ENCODE measurements at regions of chr2 and their contacts with region 1.

Region 1: GRCh38 chr2:73080097-73080710 is 8.7 kb upstream of the SFXN5 start:
- DNase-seq: no peak
- ATAC-seq: no peak
- H3K4me3 ChIP-seq: no peak overlapping the region
- H3K27ac ChIP-seq: no peak overlapping the region
- H3K4me1 ChIP-seq: no peaks in the 10 kb centered on the region
- H3K27me3 ChIP-seq: no peaks in the 10 kb centered on the region
- CTCF ChIP-seq: no peak

Region 2: GRCh38 chr2:72993147-72993932 is 86.9 kb before region 1 on chr2:
- CTCF ChIA-PET with region 1: no interaction called
- POLR2A ChIA-PET with region 1: interaction called, 12 read pairs
- in situ Hi-C with region 1: no loop called
- intact Hi-C with region 1: no loop called
- DNase-seq: peak; percentile 43
- ATAC-seq: peak; percentile 60
- H3K4me3 ChIP-seq: no peak overlapping the region
- H3K27ac ChIP-seq: no peak overlapping the region
- H3K4me1 ChIP-seq: no peaks in the 10 kb centered on the region
- H3K27me3 ChIP-seq: no peaks in the 10 kb centered on the region
- CTCF ChIP-seq: peak; percentile 89